ENCODE measurements at regions of chr11 and their contacts with region 1.

Region 1: DNA sequence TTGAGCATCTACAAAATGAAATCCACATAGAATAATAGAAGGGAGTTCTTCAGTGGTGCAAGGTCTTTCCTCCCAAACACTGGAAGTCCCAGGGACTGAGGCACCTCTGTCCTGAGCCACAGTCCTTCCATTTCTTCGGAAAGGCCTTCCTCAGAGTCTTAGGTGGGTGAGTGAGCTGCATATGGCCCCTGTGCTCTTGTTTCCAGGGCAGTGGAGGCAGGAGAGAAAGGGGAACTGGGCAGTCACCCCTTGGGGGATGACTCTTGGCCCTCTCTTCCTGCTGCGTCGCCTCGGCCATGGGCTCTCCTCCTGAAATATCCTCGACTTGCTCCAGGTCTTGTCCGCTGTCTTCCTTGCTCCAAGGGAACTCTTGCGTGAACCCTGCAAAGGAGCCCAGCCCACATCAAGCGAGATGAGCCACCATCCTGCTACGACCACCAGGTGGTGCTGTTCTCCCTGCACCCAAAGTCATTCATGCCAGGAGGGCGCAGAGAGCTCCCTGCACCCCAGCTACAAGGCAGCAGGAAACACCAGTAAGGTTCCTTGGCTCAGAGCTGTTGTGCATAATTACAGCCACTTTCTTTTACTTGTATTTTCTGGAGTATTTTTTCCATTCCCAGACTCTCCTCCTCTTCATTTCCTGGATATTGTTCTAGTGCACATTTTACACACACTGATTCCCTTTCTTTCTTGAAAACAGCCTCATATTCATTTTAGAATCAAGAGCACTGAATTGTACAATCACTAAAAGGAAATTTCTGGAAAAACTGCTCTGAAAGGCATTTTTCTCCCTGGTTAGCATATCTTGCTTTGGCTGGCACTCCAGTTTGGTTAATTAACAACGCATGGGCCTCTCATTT is 397.8 kb downstream of the OPCML start:
- DNase-seq: peak; percentile 50
- H3K4me3 ChIP-seq: no peak overlapping the region
- H3K27ac ChIP-seq: no peak overlapping the region
- H3K4me1 ChIP-seq: no peaks in the 10 kb centered on the region
- H3K27me3 ChIP-seq: peaks cover 6% of the 10 kb centered on the region
- CTCF ChIP-seq: peak; percentile 67 to 84 (median 77)
- EP300 ChIP-seq: no peak
- POLR2A ChIP-seq: no peak

Region 2: GRCh38 chr11:133072378-133072777 is 62.2 kb before region 1 on chr11:
- in situ Hi-C with region 1: no loop called
- intact Hi-C with region 1: no loop called
- DNase-seq: no peak
- H3K4me3 ChIP-seq: no peak overlapping the region
- H3K27ac ChIP-seq: no peak overlapping the region
- H3K4me1 ChIP-seq: no peaks in the 10 kb centered on the region
- H3K27me3 ChIP-seq: no peaks in the 10 kb centered on the region
- CTCF ChIP-seq: no peak
- EP300 ChIP-seq: no peak
- POLR2A ChIP-seq: no peak

Region 3: GRCh38 chr11:133082851-133083488 is 51.6 kb before region 1 on chr11:
- in situ Hi-C with region 1: no loop called
- intact Hi-C with region 1: no loop called
- DNase-seq: peak; percentile 64
- H3K4me3 ChIP-seq: peak overlapping the region in 3 of 4 donors; percentile 10 to 46 (median 33)
- H3K27ac ChIP-seq: no peak overlapping the region
- H3K4me1 ChIP-seq: peaks cover 0 to 6% (median 4%) of the 10 kb centered on the region in 4 donors
- H3K27me3 ChIP-seq: peaks cover 39% of the 10 kb centered on the region
- CTCF ChIP-seq: peak in 4 of 5 experiments; percentile 50 to 79 (median 65)
- EP300 ChIP-seq: no peak
- POLR2A ChIP-seq: no peak

Region 4: DNA sequence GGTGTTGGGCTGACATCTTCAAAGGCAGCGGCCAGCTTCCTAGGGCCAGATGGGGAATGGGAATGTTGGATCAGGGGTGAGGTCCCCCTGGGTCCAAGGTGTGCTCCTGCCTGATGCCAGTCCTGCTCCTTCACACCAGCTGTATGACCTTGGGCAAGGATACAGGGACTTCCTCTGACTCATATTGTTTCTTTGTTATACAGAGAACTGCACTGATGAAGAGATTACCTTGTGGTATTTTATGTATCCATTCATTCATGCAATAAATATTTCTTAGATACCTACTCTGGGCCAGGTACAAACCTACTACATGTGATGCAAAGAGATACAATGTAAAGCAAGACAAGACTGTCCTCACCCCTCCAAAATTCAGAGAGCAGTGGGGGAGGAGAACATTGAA is 401.7 kb after region 1 on chr11:
- in situ Hi-C with region 1: no loop called
- intact Hi-C with region 1: loop called (anchors 5 kb)
- DNase-seq: no peak
- H3K4me3 ChIP-seq: no peak overlapping the region
- H3K27ac ChIP-seq: no peak overlapping the region
- H3K4me1 ChIP-seq: no peaks in the 10 kb centered on the region
- H3K27me3 ChIP-seq: peaks cover 16% of the 10 kb centered on the region
- CTCF ChIP-seq: no peak
- EP300 ChIP-seq: no peak
- POLR2A ChIP-seq: no peak

Region 5: DNA sequence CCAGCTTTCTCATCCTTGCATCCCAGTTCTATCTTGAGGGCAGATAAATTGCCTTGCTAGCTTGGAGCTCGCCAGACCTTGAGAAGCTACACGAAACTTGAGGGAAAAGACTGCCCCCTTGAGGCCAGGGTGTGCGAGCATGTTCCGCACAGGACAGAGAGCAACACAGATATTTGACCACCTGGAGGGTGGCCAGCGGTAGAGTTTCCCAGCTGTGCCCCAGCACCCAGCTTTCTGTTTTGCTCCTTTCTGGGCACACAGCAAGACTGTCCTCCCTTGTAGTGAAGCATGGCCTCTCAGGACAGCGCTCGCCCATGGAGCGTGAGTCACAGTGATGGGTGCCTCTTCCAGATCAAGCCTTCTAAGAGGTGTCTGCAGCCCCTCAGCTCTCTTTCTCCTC is 687.2 kb after region 1 on chr11:
- in situ Hi-C with region 1: loop called in 3 of 4 experiments (anchors 10 to 25 kb)
- intact Hi-C with region 1: no loop called
- DNase-seq: peak; percentile 20
- H3K4me3 ChIP-seq: no peak overlapping the region
- H3K27ac ChIP-seq: no peak overlapping the region
- H3K4me1 ChIP-seq: no peaks in the 10 kb centered on the region
- H3K27me3 ChIP-seq: no peaks in the 10 kb centered on the region
- CTCF ChIP-seq: peak; percentile 26 to 53 (median 30)
- EP300 ChIP-seq: no peak
- POLR2A ChIP-seq: no peak

Region 6: DNA sequence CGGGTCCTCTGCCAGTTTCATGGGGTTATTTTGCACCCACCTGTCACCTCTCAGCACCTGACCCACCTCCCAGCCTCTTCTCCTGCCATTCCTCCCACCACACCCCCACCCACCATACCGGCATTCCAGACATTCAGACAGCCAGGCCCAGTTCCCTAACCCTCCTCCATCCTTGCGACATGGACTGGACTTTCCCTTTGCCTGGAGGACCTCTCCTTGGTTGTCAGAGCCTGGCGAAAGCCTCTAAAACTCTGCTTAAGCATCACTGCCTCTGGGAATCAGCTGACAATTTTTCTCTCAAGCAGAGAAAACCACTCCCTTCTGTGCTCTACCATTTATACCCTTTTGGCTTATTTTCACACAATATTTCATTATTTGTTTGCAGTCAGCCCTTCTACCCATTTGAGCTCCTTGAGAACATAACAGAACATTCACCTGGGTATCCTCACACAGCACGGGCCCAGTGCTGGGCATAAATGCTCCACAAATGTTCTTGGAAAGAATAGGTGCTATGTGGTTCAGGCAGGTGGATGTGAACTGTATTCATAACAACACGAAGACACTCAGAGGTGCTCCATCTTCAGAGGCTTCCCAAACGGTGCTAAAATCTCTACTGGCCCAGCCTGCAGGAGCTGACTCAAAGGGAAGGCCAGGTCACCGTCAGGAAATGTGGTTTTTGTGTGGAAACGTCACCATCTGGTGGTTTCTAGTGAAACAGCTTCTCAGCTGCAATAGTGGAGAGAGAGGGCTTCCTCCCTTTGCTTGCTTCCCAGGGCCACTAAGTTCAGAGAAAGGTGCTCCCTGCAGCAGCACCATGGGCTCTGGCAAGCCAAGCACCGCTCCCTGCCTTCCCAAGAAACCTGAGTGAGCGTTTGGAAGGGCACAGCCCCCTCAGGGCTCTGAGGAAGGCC is 700.4 kb after region 1 on chr11:
- in situ Hi-C with region 1: loop called in 1 of 4 experiments (anchors 10 kb)
- intact Hi-C with region 1: loop called (anchors 5 kb)
- DNase-seq: no peak
- H3K4me3 ChIP-seq: no peak overlapping the region
- H3K27ac ChIP-seq: no peak overlapping the region
- H3K4me1 ChIP-seq: no peaks in the 10 kb centered on the region
- H3K27me3 ChIP-seq: no peaks in the 10 kb centered on the region
- CTCF ChIP-seq: peak; percentile 32 to 47 (median 39)
- EP300 ChIP-seq: no peak
- POLR2A ChIP-seq: no peak